ENCODE measurements at regions of chr16 and their contacts with region 1.

Region 1: DNA sequence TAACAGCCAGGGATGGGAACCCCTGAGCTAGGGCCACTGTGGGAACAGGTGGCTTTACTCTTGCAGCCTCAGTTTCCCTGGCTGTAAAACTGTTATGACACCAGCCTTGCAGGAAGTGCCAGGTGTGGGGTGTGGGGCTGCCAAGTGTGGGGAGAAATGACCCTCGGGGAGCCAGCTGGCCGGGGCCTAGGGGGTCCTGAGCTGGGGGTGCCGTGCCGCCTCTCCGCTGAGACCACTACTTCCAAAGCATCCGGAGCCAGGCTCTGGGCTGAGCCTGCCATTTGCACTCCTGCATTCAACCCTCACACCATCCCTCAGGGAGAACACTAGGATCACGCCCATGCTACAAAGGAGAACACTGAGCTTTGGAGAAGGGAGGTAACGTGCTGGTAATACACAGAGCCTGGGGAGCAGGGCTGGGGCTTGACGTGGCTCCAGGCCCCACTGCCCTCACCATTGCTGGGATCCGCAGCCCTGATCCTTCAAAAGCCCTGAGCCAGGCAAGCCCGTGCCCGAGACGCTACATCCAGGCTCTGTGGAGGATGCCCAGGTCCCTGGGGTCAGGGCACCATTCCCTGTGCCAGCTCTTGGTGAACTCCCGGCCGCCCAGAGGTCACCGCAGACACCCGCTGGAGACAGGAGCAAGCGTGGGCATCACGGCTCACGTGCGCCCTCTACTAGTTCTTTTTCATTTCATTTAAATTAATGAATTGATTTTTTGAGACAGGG is 28.8 kb upstream of the GINS2 start:
- DNase-seq: peak; percentile 77
- ATAC-seq: peak; percentile 55
- H3K4me3 Mint-ChIP-seq: no peak overlapping the region
- H3K27ac Mint-ChIP-seq: no peak overlapping the region
- H3K4me1 Mint-ChIP-seq: peaks cover 6% of the 10 kb centered on the region
- H3K27me3 Mint-ChIP-seq: peaks cover 10% of the 10 kb centered on the region

Region 2: DNA sequence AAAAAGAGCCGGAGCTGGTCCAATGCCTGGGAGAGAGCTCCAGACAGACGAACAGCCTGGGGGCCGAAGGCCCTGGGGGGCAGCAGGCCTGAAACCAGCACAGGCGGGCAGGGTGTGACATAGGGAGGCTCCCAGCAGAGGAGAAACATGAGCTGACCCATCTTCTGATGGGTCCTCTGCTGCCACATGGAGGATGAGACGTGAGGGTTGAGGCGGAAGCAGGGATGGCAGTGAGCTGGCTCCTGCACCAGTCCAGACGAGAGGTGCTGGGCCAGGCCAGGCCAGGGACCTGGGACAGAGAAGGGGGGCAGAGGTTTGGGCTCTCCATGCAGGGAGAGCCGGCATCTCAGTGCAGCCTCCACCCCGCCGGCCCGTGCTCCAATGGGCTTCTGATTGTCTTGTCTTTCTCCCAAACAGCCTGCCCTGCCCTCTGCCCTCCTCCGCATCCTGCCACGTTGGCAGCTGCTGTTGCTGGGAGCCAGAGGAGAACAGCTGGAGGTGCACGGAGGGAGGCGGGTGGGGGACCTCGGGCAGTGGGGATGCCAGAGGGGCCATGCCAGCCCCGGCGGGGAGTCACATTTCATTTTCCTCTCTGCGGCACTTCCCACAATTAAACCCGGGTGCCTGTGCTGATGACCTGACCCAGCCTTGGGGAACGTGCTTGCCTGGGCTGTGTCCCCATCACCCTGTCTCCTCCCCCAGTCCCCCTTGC is 243.5 kb before region 1 on chr16:
- CTCF ChIA-PET with region 1: no interaction called
- POLR2A ChIA-PET with region 1: no interaction called
- DNase-seq: no peak
- ATAC-seq: no peak
- H3K4me3 Mint-ChIP-seq: no peak overlapping the region
- H3K27ac Mint-ChIP-seq: no peak overlapping the region
- H3K4me1 Mint-ChIP-seq: no peaks in the 10 kb centered on the region
- H3K27me3 Mint-ChIP-seq: no peaks in the 10 kb centered on the region

Region 3: GRCh38 chr16:85626191-85626981 is 91.2 kb before region 1 on chr16:
- CTCF ChIA-PET with region 1: no interaction called
- POLR2A ChIA-PET with region 1: no interaction called
- DNase-seq: no peak
- ATAC-seq: no peak
- H3K4me3 Mint-ChIP-seq: no peak overlapping the region
- H3K27ac Mint-ChIP-seq: no peak overlapping the region
- H3K4me1 Mint-ChIP-seq: peaks cover 29% of the 10 kb centered on the region
- H3K27me3 Mint-ChIP-seq: no peaks in the 10 kb centered on the region

Region 4: GRCh38 chr16:85659805-85660495 is 57.6 kb before region 1 on chr16:
- CTCF ChIA-PET with region 1: interaction called, 14 read pairs
- POLR2A ChIA-PET with region 1: no interaction called
- DNase-seq: peak; percentile 76
- ATAC-seq: peak; percentile 71
- H3K4me3 Mint-ChIP-seq: no peak overlapping the region
- H3K27ac Mint-ChIP-seq: no peak overlapping the region
- H3K4me1 Mint-ChIP-seq: no peaks in the 10 kb centered on the region
- H3K27me3 Mint-ChIP-seq: no peaks in the 10 kb centered on the region

Region 5: DNA sequence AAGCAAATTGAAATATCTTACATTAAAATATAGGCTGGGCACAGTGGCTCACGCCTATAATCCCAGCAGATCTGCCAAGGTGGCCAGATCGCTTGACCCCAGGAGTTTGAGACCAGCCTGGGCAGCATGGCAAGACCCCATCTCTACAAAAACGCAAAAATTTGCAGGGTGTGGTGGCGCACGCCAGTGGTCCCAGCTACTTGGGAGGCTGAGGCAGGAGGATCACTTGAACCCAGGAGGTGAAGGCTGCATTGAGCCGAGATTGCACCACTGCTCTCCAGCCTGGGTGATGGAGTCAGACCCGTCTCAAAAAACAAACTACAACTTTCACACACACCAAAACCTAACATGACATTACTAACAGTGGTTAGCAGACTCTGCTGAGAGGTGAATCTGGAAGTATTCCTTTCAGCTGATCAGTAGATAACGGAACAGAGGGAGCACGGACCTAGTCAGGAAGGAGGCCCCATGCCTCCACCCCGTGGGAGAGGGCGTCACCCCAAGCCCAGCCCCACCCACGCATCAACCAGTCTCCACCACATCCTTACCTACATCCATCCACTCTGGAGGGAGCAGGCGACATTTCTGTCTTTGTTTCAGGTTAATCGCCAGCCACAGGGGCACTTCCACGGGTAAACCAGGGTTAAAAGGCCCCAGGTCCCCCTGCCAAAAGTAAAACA is 30.5 kb before region 1 on chr16:
- CTCF ChIA-PET with region 1: interaction called, 10 read pairs
- POLR2A ChIA-PET with region 1: no interaction called
- DNase-seq: peak; percentile 67
- ATAC-seq: peak; percentile 26
- H3K4me3 Mint-ChIP-seq: peak overlapping the region; percentile 85
- H3K27ac Mint-ChIP-seq: peak overlapping the region; percentile 54
- H3K4me1 Mint-ChIP-seq: peaks cover 24% of the 10 kb centered on the region
- H3K27me3 Mint-ChIP-seq: peaks cover 10% of the 10 kb centered on the region

Region 6: GRCh38 chr16:85777583-85778298 is 60.2 kb after region 1 on chr16:
- CTCF ChIA-PET with region 1: no interaction called
- POLR2A ChIA-PET with region 1: no interaction called
- DNase-seq: no peak
- ATAC-seq: no peak
- H3K4me3 Mint-ChIP-seq: no peak overlapping the region
- H3K27ac Mint-ChIP-seq: no peak overlapping the region
- H3K4me1 Mint-ChIP-seq: peaks cover 7% of the 10 kb centered on the region
- H3K27me3 Mint-ChIP-seq: no peaks in the 10 kb centered on the region

Measured in activated CD8-positive, alpha-beta T cell treated with anti-CD3 and anti-CD28 coated beads, Interleukin-2, amount 10 ng/mL, durations not matched to agents 7 days and 5 days (primary cell).